ENCODE measurements at regions of chr17 and their contacts with region 1.

Region 1: DNA sequence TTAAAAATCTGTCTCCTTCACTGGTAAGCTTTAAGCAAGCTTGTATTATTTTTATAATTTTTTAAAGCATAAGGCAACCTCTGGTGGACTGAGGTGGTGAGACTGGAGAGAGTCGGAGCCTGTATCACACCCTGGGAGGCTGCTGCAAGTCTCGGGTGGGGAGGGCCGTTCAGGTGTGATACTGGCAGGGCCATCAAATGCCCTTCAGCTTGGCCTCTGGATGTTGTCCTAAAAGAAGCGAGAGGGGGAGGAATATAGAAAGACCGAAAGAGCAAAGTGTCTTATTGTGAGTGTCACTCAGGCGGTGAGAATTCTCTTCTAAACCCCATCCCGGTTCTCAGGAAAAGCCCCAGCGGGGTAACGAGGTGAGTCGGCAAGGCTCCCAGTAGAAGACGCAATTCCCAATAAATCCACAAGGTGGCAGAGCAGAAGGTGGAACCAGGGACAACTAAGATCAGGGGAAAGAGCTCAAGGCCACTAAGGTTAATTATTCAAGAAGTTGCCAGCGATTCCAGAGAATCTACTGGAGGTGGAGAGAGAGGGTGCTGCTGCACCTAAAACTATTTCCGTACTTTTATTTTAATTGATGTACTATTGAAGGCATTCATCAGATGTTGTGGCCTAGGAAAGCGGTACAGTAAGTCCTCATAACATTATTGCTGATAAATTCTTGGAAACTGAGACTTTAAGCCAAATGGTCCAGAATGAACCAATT is 14.1 kb downstream of the C17orf67 start:
- DNase-seq: peak; percentile 22 to 86 (median 54)
- ATAC-seq: peak; percentile 75 to 81 (median 76)
- H3K4me3 ChIP-seq: no peak overlapping the region
- H3K4me3 Mint-ChIP-seq: no peak overlapping the region
- H3K27ac ChIP-seq: no peak overlapping the region
- H3K27ac Mint-ChIP-seq: no peak overlapping the region
- H3K4me1 ChIP-seq: peaks cover 0 to 5% of the 10 kb centered on the region in 2 experiments
- H3K4me1 Mint-ChIP-seq: peaks cover 5 to 9% (median 6%) of the 10 kb centered on the region in 3 donors
- H3K27me3 ChIP-seq: no peaks in the 10 kb centered on the region
- H3K27me3 Mint-ChIP-seq: no peaks in the 10 kb centered on the region

Region 2: GRCh38 chr17:56939901-56940343 is 120.3 kb after region 1 on chr17:
- CTCF ChIA-PET with region 1: interaction called, 6 to 31 read pairs
- POLR2A ChIA-PET with region 1: no interaction called
- DNase-seq: peak in 3 of 35 experiments; percentile 4 to 74 (median 6)
- ATAC-seq: peak in 3 of 4 experiments; percentile 50 to 73 (median 55)
- H3K4me3 ChIP-seq: no peak overlapping the region
- H3K4me3 Mint-ChIP-seq: no peak overlapping the region
- H3K27ac ChIP-seq: no peak overlapping the region
- H3K27ac Mint-ChIP-seq: no peak overlapping the region
- H3K4me1 ChIP-seq: no peaks in the 10 kb centered on the region
- H3K4me1 Mint-ChIP-seq: peaks cover 0 to 3% (median 0%) of the 10 kb centered on the region in 3 donors
- H3K27me3 ChIP-seq: no peaks in the 10 kb centered on the region
- H3K27me3 Mint-ChIP-seq: no peaks in the 10 kb centered on the region

Measured in T-cell (primary cell).